Lower leg skin (tissue), 4 donors: ENCODE measurements at regions of chr5 and their contacts with region 1.

Region 1: GRCh38 chr5:125064621-125065438 is 318.4 kb upstream of the ZNF608 start:
- DNase-seq: no peak
- H3K4me3 ChIP-seq: no peak overlapping the region
- CTCF ChIP-seq: no peak
- POLR2A ChIP-seq: no peak

Region 2: DNA sequence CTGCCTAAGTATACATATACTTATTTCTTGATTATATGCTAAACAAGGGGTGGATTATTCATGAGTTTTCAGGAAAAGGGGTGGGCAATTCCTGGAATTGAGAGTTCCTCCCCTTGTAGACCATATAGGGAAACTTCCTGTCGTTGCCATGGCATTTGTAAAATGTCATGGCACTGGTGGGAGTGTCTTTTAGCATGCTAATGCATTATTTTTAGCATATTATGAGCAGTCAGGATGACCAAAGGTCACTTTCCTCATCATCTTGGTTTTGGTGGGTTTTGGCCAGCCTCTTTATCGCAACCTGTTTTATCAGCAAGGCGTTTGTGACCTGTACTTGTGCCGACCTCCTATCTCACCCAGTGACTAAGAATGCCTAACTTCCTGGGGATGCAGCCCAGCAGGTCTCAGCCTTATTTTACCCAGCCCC is 1449.3 kb after region 1 on chr5:
- intact Hi-C with region 1: loop called (anchors 5 kb)
- DNase-seq: no peak
- H3K4me3 ChIP-seq: no peak overlapping the region
- CTCF ChIP-seq: no peak
- POLR2A ChIP-seq: no peak